Activated CD4-positive, alpha-beta T cell treated with anti-CD3 and anti-CD28 coated beads, Interleukin-2, amount 10 ng/mL, durations not matched to agents 24 days and 14 days (primary cell): ENCODE measurements at regions of chr11 and their contacts with region 1.

Region 1: GRCh38 chr11:105000797-105001196 is 22.2 kb downstream of the CASP5 start:
- DNase-seq: peak; percentile 86
- H3K4me3 Mint-ChIP-seq: no peak overlapping the region
- H3K27ac Mint-ChIP-seq: no peak overlapping the region
- H3K4me1 Mint-ChIP-seq: peaks cover 4% of the 10 kb centered on the region
- H3K27me3 Mint-ChIP-seq: peaks cover 4% of the 10 kb centered on the region

Region 2: GRCh38 chr11:104609311-104610085 is 391.3 kb before region 1 on chr11:
- intact Hi-C with region 1: loop called (anchors 2 kb)
- DNase-seq: peak; percentile 82
- H3K4me3 Mint-ChIP-seq: no peak overlapping the region
- H3K27ac Mint-ChIP-seq: no peak overlapping the region
- H3K4me1 Mint-ChIP-seq: peaks cover 14% of the 10 kb centered on the region
- H3K27me3 Mint-ChIP-seq: peaks cover 8% of the 10 kb centered on the region

Region 3: DNA sequence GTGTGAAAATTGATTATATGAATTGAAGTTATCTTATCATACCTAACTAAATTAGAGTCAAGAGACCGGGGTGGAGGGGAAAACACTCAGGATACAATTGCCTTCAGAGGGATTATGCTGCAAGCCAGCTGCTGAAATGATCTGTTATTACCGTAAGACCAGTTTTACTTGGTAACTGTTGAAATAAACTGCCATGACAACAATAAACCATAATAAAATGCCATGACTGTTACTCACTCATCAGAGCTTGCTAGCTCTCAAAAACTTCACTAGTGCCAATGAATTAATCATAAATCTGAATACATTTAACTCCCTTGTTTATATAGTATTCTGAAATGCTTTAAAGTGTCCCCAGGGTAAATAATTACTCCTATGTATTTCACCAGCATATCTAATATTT is 170.7 kb before region 1 on chr11:
- intact Hi-C with region 1: no loop called
- DNase-seq: no peak
- H3K4me3 Mint-ChIP-seq: no peak overlapping the region
- H3K27ac Mint-ChIP-seq: no peak overlapping the region
- H3K4me1 Mint-ChIP-seq: no peaks in the 10 kb centered on the region
- H3K27me3 Mint-ChIP-seq: no peaks in the 10 kb centered on the region